ENCODE measurements at regions of chrX and their contacts with region 1.

Region 1: GRCh38 chrX:129982274-129983251 is at the start of gene BCORL1:
- DNase-seq: peak; percentile 90
- H3K4me3 Mint-ChIP-seq: no peak within 1 kb of the TSS
- H3K27ac Mint-ChIP-seq: no peak within 1 kb of the TSS
- H3K4me1 Mint-ChIP-seq: peaks cover 16% of the 10 kb centered on the region
- H3K27me3 Mint-ChIP-seq: no peaks in the 10 kb centered on the region
- total RNA-seq, gene BCORL1: 3.6 to 4.1 TPM

Region 2: DNA sequence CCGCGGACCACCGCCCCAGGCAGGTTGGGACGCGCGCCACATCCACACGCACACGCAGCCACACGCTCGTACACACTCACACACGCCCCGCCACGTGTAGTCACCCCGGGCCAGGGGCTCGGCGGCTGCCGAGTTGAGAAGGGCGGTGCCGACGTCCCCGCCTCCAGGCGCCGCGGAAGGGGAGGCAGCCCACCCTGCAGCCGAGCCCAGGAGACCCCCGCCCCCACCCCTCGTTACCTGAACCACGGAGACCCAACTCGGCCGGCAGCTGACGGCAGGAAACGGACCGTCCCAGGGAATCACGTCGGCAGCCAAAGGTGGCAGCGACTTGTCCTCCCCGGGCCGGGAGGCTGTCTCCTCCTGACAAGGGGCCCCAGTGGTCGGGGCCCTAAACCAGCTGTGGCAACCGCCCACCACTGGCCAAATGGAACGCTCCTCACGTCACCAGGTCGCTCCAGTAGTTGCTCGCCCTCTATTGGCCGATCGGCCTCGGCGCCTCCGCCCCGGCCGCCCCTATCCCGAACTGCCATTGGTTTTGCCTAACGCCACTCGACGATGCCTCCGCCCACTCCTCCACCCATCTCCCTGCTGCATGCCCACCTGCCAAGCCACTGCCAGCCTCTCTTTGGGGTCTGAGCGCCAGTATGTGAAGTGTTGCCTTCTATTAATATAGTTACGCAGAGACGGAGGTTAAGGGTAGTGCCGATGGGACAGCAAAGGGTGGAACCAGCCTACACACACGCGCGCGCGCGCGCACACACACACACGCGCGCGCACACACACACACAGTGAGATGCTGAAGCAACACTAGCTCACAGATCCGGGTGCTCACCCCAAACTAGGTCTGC is 138.9 kb before region 1 on chrX and contains the start of gene ZDHHC9:
- CTCF ChIA-PET with region 1: no interaction called
- intact Hi-C with region 1: loop called (anchors 2 kb)
- DNase-seq: peak; percentile 89
- H3K4me3 Mint-ChIP-seq: peak within 1 kb of the TSS; percentile 88
- H3K27ac Mint-ChIP-seq: peak within 1 kb of the TSS; percentile 70
- H3K4me1 Mint-ChIP-seq: peaks cover 38% of the 10 kb centered on the region
- H3K27me3 Mint-ChIP-seq: no peaks in the 10 kb centered on the region
- total RNA-seq, gene ZDHHC9: 7.1 TPM

Region 3: DNA sequence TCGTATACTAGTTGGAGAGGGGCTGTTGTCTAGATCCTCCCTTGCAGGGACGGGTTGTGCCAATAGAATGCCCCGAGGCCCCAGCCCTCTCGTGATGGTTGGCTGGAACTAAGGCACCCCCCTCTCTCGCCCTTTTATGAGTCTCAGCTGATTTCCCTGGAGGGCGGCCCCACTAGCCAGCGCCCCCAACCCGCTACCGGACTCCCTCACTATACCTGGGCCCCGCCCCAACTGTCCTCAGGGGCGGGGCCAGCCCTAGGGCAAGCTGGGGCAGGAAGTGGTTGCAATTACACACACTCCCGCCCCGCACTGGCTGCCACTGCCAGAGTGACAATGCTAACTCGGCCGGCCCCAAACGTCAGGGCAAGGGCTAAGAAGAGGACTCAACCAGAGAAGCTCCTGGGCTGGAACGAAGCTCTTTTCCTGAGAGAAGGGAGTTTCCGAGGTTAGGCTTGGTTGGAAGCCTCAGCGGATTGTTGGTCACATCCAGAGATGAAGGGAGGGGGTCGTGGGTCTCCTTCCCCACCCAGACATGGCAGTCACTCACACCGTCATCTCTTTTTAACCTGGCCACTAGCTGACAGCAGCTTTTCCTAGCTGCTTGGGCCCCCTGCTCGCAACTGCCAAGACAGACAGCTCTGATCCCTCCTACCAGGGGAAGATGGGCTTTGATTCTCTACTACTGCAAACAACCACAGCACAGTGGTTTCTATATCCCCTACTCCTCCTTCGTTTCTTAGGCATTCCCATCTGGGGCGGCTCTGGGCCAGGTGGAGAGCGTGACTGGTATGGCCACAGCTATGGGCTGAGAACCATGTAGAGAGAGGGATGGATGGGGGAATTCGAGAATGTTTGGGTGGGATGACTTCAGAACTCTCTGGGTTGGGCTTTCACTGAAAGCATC is 21.1 kb before region 1 on chrX:
- CTCF ChIA-PET with region 1: no interaction called
- intact Hi-C with region 1: loop called (anchors 1 kb)
- DNase-seq: peak; percentile 84
- H3K4me3 Mint-ChIP-seq: peak overlapping the region; percentile 76
- H3K27ac Mint-ChIP-seq: peak overlapping the region; percentile 86
- H3K4me1 Mint-ChIP-seq: peaks cover 11% of the 10 kb centered on the region
- H3K27me3 Mint-ChIP-seq: no peaks in the 10 kb centered on the region

Region 4: GRCh38 chrX:130079824-130080406 is 97.4 kb after region 1 on chrX:
- CTCF ChIA-PET with region 1: no interaction called
- intact Hi-C with region 1: loop called (anchors 1 kb)
- DNase-seq: peak; percentile 74
- H3K4me3 Mint-ChIP-seq: no peak overlapping the region
- H3K27ac Mint-ChIP-seq: peak overlapping the region; percentile 4
- H3K4me1 Mint-ChIP-seq: peaks cover 41% of the 10 kb centered on the region
- H3K27me3 Mint-ChIP-seq: no peaks in the 10 kb centered on the region

Region 5: GRCh38 chrX:130268500-130269170 is 286.1 kb after region 1 on chrX and contains the start of gene ZNF280C:
- CTCF ChIA-PET with region 1: no interaction called
- intact Hi-C with region 1: loop called (anchors 1 kb)
- DNase-seq: peak; percentile 95
- H3K4me3 Mint-ChIP-seq: peak within 1 kb of the TSS; percentile 85
- H3K27ac Mint-ChIP-seq: peak within 1 kb of the TSS; percentile 79
- H3K4me1 Mint-ChIP-seq: peaks cover 18% of the 10 kb centered on the region
- H3K27me3 Mint-ChIP-seq: no peaks in the 10 kb centered on the region
- total RNA-seq, gene ZNF280C: 3.9 to 4.0 TPM

Region 6: DNA sequence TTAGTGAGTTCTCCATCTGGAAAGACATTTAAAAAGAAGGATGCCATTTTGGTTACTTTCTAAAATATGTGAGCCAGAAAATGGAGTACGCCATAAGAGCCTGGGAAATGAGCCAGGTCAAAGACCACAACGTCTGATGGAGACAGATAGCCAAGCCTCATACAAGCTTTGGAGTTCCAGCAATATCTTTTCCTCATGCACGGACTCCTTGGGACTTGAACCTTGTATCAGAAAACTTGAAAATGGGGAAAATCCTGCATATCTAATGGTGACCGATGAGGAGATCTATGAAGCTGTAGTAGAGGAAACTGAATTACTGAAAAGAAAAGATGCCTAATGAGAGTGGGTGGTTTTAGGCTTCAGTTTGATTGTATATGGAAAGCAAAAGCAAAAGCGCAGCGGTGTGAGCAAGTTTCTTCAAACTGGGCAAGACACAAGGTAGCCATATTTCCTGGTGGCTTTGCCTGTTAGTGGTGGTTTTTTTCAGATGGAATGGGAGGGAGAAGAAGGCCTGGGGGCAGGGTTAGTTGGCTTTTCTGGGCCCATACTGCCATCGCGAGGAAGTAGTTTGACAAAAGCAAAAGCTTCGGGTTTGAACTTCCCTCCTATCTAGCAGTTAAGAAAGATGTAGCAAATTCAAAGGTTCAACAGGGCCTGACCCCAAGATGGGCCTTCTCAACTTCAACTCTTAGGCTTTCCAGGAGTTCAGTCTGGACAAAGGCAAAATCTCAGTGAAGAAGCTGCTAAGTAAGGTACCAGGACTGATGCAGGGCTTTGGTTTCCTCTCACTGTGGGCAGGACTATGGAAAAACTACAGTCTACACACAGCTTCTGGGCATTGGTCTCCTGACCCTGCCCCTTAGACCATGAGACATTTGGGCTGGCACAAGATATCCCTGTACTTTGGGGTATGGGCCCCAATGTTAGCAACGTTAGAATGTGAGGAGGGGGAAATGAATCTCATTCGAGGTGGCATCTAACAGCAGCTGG is 1830.6 kb after region 1 on chrX:
- CTCF ChIA-PET with region 1: no interaction called
- intact Hi-C with region 1: loop called (anchors 10 kb)
- DNase-seq: peak; percentile 79
- H3K4me3 Mint-ChIP-seq: peak overlapping the region; percentile 67
- H3K27ac Mint-ChIP-seq: peak overlapping the region; percentile 89
- H3K4me1 Mint-ChIP-seq: peaks cover 30% of the 10 kb centered on the region
- H3K27me3 Mint-ChIP-seq: no peaks in the 10 kb centered on the region